ENCODE measurements at regions of chr1 and their contacts with region 1.

Region 1: DNA sequence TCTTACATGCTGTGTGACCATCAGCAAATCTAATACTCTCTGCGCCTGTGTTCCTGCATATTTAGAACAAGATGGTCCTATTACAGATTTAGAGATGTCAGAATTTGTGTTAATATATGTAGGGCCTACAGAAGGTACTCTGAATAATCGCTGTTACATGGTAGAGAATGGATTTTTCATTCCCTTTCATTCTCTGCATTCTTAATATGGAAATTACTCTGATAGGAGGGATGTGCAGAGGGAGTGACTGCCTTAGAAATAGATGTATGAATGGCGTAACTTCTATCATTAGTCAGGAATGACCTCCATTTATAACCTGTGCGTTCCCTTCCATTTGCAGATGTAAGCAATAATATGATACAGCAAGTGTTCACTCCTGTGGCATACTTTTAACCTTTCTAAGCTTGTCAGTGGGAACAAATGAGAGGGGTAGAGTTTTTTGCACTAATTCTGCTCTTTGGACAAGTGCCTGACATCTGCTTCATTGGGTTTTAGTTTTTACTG is 45.6 kb downstream of the MIA3 start:
- DNase-seq: no peak
- ATAC-seq: no peak
- H3K4me3 ChIP-seq: no peak overlapping the region
- H3K27ac ChIP-seq: no peak overlapping the region
- H3K4me1 ChIP-seq: no peaks in the 10 kb centered on the region
- H3K27me3 ChIP-seq: no peaks in the 10 kb centered on the region
- CTCF ChIP-seq: no peak
- EP300 ChIP-seq: no peak
- POLR2A ChIP-seq: no peak
- RAD21 ChIP-seq: no peak

Region 2: GRCh38 chr1:222697826-222698225 is 34.3 kb after region 1 on chr1:
- CTCF ChIA-PET with region 1: no interaction called
- POLR2A ChIA-PET with region 1: no interaction called
- in situ Hi-C with region 1: no loop called
- intact Hi-C with region 1: loop called (anchors 5 kb)
- DNase-seq: no peak
- ATAC-seq: no peak
- H3K4me3 ChIP-seq: no peak overlapping the region
- H3K27ac ChIP-seq: no peak overlapping the region
- H3K4me1 ChIP-seq: no peaks in the 10 kb centered on the region
- H3K27me3 ChIP-seq: no peaks in the 10 kb centered on the region
- CTCF ChIP-seq: no peak
- EP300 ChIP-seq: no peak
- POLR2A ChIP-seq: no peak
- RAD21 ChIP-seq: no peak